Activated CD4-positive, alpha-beta T cell treated with anti-CD3 and anti-CD28 coated beads for 36 hours (primary cell): ENCODE measurements at regions of chr2 and their contacts with region 1.

Region 1: DNA sequence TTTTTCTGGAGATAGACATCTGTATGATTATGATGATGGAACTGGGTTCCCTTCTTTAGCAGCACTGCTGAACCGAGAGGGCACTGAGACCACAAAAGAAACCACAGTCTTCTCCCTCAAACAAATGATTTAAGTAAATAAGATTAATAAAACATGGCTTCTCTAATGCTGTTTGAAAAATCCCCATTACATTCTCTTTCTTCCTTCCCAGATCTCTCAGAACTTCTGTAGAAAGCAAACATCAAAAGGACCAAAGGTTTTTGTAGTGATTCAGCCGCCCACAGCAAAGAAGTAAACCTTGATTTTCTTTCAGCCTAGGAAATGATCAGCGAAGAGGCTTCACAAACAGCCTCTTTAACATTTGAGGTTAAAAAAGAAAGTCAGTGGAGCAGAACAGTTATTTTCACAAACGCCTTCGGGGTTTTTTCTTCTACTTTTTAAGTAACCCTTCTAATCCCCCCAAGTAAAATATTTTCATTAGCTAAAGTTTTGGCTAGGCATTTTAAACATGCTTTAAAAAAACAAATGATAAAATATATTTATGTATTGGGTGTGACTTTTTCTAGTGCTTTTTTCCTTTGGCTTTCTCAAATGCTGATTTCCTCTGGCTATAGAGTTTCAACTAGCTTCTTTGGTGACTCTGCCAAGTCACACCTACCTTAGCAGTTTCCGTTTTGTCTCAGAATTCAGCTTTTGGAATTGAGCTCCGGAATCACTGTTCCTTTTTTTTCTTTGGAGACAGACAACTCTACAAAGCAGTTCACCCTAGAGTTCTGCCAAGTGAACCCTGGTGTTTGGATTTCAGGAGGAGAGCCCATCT is 89.6 kb downstream of the UPP2 start:
- DNase-seq: peak; percentile 45
- ATAC-seq: peak; percentile 91
- H3K4me3 Mint-ChIP-seq: peak overlapping the region; percentile 15
- H3K27ac Mint-ChIP-seq: peak overlapping the region; percentile 63
- H3K4me1 Mint-ChIP-seq: peaks cover 31% of the 10 kb centered on the region
- H3K27me3 Mint-ChIP-seq: peaks cover 30% of the 10 kb centered on the region

Region 2: DNA sequence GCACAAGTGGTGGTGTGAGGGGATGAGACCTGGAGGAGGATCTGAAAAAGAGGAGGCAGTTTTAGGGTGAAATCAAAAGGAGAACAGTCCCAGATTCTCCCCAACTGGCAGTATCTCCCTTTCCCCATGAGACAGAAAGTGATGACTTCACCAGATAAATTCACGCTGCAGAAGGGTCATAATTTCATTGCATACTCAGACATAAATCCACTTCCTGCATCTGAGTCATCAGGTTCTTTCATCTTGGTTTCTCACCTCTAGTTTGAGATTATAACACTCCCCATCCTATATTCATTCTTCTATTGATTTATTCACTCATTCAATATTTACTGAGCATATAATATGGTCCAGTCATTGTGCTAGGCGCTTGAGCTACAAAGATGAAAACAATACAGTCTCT is 200.6 kb after region 1 on chr2:
- CTCF ChIA-PET with region 1: interaction called, 3 read pairs
- POLR2A ChIA-PET with region 1: no interaction called
- intact Hi-C with region 1: loop called in 1 of 2 experiments (anchors 10 kb)
- DNase-seq: no peak
- ATAC-seq: peak; percentile 92
- H3K4me3 Mint-ChIP-seq: no peak overlapping the region
- H3K27ac Mint-ChIP-seq: peak overlapping the region; percentile 59
- H3K4me1 Mint-ChIP-seq: peaks cover 8% of the 10 kb centered on the region
- H3K27me3 Mint-ChIP-seq: peaks cover 12% of the 10 kb centered on the region

Region 3: DNA sequence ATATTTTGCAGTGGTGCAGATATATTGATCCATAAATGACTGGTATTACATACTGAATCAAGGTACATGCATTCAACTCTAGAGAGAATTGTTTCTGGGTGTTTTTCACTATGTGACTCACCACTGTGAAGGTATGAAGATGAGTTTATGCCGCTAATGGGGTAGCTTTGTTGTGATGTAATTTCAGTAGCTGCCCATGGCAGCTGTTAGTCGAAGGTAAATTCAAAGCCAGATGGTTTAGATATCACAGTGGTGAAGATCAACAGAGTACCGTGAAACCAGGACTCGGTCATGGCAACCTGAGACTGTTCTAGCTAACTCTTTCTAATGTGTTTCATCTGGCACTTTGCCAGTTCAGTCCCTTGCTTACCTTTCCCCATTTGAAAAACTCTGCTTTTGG is 315.9 kb after region 1 on chr2:
- CTCF ChIA-PET with region 1: no interaction called
- POLR2A ChIA-PET with region 1: no interaction called
- intact Hi-C with region 1: loop called in 1 of 2 experiments (anchors 5 kb)
- DNase-seq: peak; percentile 36
- ATAC-seq: peak; percentile 89
- H3K4me3 Mint-ChIP-seq: no peak overlapping the region
- H3K27ac Mint-ChIP-seq: no peak overlapping the region
- H3K4me1 Mint-ChIP-seq: peaks cover 22% of the 10 kb centered on the region
- H3K27me3 Mint-ChIP-seq: no peaks in the 10 kb centered on the region

Region 4: GRCh38 chr2:158879229-158879916 is 688.1 kb after region 1 on chr2:
- CTCF ChIA-PET with region 1: no interaction called
- POLR2A ChIA-PET with region 1: no interaction called
- intact Hi-C with region 1: no loop called
- DNase-seq: no peak
- ATAC-seq: no peak
- H3K4me3 Mint-ChIP-seq: no peak overlapping the region
- H3K27ac Mint-ChIP-seq: no peak overlapping the region
- H3K4me1 Mint-ChIP-seq: no peaks in the 10 kb centered on the region
- H3K27me3 Mint-ChIP-seq: peaks cover 2% of the 10 kb centered on the region